Psoas muscle (tissue), 8 donors: ENCODE measurements at regions of chr20 and their contacts with region 1.

Region 1: GRCh38 chr20:63178889-63179686 is 36.8 kb downstream of the YTHDF1 start:
- DNase-seq: peak; percentile 29 to 69
- ATAC-seq: peak in 3 of 4 donors; percentile 56 to 66 (median 57)
- H3K4me3 ChIP-seq: peak overlapping the region; percentile 49
- H3K27ac ChIP-seq: no peak overlapping the region
- H3K4me1 ChIP-seq: peaks cover 13% of the 10 kb centered on the region
- H3K27me3 ChIP-seq: peaks cover 0 to 94% (median 50%) of the 10 kb centered on the region in 3 donors
- CTCF ChIP-seq: peak; percentile 50

Region 2: DNA sequence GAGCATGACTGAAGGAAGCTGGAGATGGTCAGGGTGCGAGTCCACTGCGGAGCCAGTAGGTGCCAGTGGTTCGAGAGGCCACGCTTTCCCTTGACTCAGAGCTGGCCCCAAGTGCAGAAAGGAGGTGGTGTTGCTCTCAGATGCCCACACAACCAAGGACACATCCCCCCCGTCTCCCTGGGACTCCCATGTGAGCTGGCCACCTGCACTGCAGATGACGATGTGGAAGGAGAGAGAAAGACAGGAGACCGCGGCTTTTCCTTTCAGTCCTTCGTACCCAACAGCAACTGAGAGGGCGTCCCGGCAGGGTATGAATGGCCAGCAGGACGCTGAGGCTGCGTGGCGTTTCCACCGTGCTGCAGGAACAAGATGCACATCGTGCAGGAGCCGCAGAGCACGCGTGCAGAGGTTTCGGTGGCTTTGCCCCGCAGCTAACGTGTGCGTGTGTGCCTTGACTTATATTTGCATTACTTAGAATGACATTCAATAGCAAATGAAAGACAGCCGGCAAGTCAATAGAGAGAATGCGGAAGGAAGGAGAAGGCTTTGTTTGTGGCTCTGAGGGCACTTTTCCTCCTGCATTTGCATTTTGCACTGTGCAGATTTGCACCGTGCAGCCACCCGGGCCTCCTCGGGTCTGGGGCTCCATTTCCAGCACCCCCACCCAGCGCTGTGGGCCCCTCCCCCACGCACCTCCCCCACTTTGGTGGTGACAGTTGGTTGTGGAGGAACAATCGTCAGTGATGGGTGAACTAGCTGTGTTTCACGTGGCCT is 146.0 kb before region 1 on chr20:
- intact Hi-C with region 1: no loop called
- DNase-seq: peak in 1 of 2 donors; percentile 40
- ATAC-seq: no peak
- H3K4me3 ChIP-seq: no peak overlapping the region
- H3K27ac ChIP-seq: no peak overlapping the region
- H3K4me1 ChIP-seq: no peaks in the 10 kb centered on the region
- H3K27me3 ChIP-seq: peaks cover 0 to 81% (median 16%) of the 10 kb centered on the region in 3 donors
- CTCF ChIP-seq: no peak

Region 3: DNA sequence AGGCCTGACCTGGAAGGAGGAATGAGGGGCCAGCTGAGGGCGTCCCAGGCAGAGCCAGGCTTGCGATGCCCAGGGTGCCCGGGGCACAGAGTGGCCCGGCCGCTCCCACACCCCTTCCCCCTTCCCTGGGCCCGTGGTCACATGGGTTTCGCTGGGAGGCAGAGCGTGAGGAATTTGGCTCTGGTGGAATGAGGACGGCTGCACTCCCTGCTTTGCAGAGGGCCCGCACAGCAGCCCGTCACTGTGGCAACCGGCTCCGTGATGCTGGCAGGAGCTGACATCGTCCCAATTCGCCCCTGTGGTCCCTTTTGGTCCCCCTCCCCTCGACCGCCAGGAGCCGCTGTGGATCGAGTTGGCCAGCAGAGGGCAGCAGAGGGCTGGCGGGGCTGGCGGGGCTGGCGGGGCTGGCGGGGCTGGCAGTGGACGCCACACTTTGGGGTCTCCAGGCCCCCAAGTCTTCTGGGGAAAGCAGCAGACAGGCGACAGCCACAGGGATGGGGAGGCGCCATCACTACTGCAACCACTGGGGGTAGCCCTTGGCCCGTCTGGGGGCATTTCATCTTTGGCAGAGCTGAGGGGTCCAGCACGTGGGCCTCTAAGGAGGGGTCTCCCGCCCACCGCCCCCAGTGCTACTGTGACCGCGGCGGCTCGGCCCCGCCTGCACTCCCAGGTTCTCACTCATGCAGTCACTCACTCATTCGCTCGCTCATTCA is 122.7 kb before region 1 on chr20:
- intact Hi-C with region 1: loop called (anchors 1 to 5 kb)
- DNase-seq: peak; percentile 37 to 68
- ATAC-seq: peak; percentile 65 to 88 (median 76)
- H3K4me3 ChIP-seq: no peak overlapping the region
- H3K27ac ChIP-seq: no peak overlapping the region
- H3K4me1 ChIP-seq: peaks cover 4% of the 10 kb centered on the region
- H3K27me3 ChIP-seq: peaks cover 0 to 68% (median 28%) of the 10 kb centered on the region in 3 donors
- CTCF ChIP-seq: peak; percentile 90

Region 4: DNA sequence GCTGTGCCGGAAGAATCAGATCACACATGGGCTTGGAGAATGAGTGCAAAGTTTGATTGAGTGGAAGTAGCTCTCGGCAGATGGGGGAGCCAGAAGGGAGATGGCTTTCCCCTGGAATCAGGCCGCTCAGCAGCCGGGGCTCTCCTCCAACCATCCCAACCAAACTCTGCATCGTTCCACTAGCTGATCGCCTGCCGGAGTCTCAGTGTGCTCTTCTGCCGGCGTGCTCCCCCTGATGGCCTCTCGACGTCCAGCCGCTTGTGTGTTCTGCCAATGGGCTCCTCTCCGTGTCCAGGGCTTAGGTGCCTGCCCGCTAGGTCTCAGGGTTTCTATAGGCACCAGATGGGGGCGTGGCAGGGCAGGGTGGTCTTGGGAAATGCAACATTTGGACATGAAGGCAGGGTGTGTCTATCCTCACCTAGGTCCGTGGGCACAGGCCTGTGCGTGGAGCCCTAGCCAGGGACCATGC is 51.7 kb after region 1 on chr20:
- intact Hi-C with region 1: loop called in 1 of 2 experiments (anchors 5 kb)
- DNase-seq: peak; percentile 52 to 65
- ATAC-seq: peak; percentile 59 to 75 (median 69)
- H3K4me3 ChIP-seq: no peak overlapping the region
- H3K27ac ChIP-seq: no peak overlapping the region
- H3K4me1 ChIP-seq: no peaks in the 10 kb centered on the region
- H3K27me3 ChIP-seq: peaks cover 0 to 64% (median 2%) of the 10 kb centered on the region in 3 donors
- CTCF ChIP-seq: peak; percentile 43

Region 5: DNA sequence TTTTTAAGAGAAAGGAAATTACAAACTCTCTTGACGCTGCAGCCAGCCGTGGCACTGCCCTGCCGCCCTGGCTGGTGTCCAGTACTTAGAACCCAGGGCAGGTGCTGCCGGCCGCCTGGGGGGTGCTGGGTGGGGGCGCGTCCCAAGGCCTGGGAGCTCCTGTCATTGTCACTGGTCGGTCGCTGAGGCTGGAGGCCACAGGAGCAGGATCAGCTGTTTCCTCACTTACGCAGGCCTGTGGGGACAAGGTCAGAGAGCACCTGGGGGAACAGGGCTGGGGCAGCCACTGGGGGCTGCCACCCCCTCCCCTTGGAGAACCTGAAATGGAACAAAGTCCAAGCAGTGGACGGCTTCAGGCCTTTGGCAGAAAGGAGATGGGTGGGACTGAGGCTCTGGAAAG is 62.2 kb after region 1 on chr20:
- intact Hi-C with region 1: no loop called
- DNase-seq: no peak
- ATAC-seq: no peak
- H3K4me3 ChIP-seq: no peak overlapping the region
- H3K27ac ChIP-seq: no peak overlapping the region
- H3K4me1 ChIP-seq: no peaks in the 10 kb centered on the region
- H3K27me3 ChIP-seq: peaks cover 0 to 43% (median 0%) of the 10 kb centered on the region in 3 donors
- CTCF ChIP-seq: no peak